Motor neuron (in vitro differentiated cells): ENCODE measurements at regions of chr1 and their contacts with region 1.

Region 1: GRCh38 chr1:178501705-178502329 is 5.1 kb upstream of the CLEC20A start:
- ATAC-seq: peak; percentile 70 to 94 (median 82)
- H3K4me3 ChIP-seq: no peak overlapping the region
- H3K27ac ChIP-seq: no peak overlapping the region
- H3K4me1 ChIP-seq: no peaks in the 10 kb centered on the region

Region 2: GRCh38 chr1:178344513-178345082 is 157.2 kb before region 1 on chr1:
- in situ Hi-C with region 1: loop called in 1 of 9 experiments (anchors 25 kb)
- ATAC-seq: peak; percentile 63 to 89 (median 74)
- H3K4me3 ChIP-seq: no peak overlapping the region
- H3K27ac ChIP-seq: peak overlapping the region in 1 of 2 donors; percentile 25
- H3K4me1 ChIP-seq: peaks cover 24 to 59% of the 10 kb centered on the region in 2 donors